H1 (cell line): ENCODE measurements at regions of chr1 and their contacts with region 1.

Region 1: DNA sequence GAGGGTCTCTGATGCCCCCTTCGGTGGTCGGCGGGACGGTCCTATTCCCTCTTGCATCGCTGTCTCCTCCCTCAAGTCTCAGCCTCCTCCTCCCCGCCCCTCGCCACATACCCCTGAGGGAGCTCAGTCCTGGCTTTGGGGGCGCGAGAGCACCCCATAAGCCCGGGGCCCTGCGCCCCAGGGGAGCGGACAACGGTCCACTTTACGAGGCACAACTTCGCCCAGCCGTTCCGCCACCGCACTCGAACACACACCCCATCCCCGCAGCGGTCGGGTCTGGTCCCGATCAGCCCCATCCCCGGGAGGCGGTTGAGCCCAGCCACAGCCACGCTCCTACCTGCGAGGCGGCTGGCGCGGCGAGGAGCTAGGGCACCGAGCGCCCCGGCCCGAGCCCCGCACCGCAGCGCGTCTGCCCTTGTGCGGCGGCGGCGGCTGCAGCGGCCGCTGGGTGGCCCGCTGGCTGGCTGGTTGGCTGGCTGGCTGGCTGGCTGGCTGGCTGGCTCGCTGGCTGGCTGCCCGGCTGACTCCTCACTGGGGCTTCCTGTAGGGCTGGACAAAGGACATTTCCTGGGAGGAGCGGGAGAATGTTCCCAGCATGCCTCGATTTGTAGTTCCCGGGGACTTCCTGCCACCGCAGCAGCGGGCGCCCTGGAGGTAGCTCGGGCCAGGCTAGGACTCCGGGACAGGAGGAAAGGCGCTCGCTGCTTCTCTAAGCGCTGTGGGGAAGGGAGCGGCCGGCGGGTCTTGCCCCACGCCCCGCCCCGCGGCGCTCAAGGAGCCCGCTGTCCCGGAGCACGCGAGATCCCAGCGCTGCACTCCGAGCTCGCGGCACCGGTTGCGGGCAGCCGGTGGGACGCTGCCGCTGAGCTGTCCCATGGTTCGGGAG is at the start of gene ZNF697:
- DNase-seq: peak; percentile 77 to 88
- H3K4me3 ChIP-seq: peak within 1 kb of the TSS; percentile 67 to 88 (median 81)
- H3K27ac ChIP-seq: peak within 1 kb of the TSS; percentile 80; the same call in 1 of the 2 replicates
- H3K4me1 ChIP-seq: peaks cover 0 to 16% (median 11%) of the 10 kb centered on the region in 4 experiments; a peak in 6 of 7 replicates
- H3K27me3 ChIP-seq: no peaks in the 10 kb centered on the region; a peak in 1 of 7 replicates
- CTCF ChIP-seq: peak; percentile 55 to 82 (median 73)
- EP300 ChIP-seq: no peak
- POLR2A ChIP-seq: peak; percentile 3 to 64; a peak in 2 of 3 replicates
- RAD21 ChIP-seq: peak; percentile 61 to 67; a peak in 3 of 4 replicates
- total RNA-seq, gene ZNF697: 17.9 and 18.3 TPM in 2 replicates

Region 2: DNA sequence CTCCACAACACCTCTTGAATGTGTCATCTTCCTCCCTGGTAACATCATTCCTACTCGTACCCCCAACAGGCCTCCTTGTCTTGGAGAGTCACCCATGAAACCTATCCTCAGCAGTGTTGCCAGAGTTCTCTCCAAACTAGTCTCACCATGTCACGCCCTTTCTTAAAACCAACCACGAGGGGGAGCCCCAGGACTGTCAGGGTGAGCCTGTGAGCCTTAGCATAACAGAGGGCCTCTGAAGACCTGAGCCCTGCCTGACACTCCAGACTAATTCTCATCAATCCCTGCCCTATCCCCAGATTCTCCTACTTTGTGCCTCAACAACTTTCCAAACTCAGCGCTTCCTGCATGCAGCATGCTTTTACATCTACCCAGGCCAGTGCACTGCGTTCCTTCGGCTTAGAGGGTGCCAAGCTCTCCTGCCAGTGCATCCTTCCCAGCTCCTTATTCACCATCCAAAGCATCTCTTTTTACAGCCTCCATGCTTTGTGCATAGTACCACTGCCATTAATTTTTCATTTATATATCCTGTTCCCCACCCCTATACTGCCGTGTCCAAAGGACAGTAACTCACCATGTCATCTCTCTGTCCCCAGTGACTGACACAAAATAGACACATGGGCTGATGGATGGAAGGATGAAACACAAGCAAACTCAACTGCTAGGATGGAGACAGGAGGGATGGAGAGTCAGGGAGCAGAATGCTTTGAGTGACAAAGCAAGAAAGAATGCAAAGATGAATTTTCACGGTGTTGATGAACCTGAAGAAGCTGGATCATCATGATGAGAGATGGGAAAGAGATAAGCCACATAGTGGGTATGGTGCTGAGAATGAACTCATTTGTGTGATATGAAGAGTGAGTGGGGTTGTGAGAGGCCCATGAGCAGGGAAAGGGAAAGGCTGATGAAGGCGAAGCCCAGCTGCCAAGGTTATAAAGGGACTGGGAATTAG is 33.9 kb before region 1 on chr1:
- CTCF ChIA-PET with region 1: interaction called, 786 read pairs
- POLR2A ChIA-PET with region 1: interaction called, 38 read pairs
- DNase-seq: peak; percentile 69 to 96
- H3K4me3 ChIP-seq: no peak overlapping the region
- H3K27ac ChIP-seq: no peak overlapping the region
- H3K4me1 ChIP-seq: peaks cover 0 to 3% (median under 1%) of the 10 kb centered on the region in 4 experiments; a peak in 5 of 7 replicates
- H3K27me3 ChIP-seq: no peaks in the 10 kb centered on the region
- CTCF ChIP-seq: peak; percentile 62 to 94 (median 80)
- EP300 ChIP-seq: no peak
- POLR2A ChIP-seq: no peak
- RAD21 ChIP-seq: peak; percentile 92 to 97

Region 3: GRCh38 chr1:119631433-119632102 is 16.4 kb before region 1 on chr1:
- CTCF ChIA-PET with region 1: interaction called, 786 read pairs
- POLR2A ChIA-PET with region 1: interaction called, 49 read pairs
- DNase-seq: peak in 1 of 2 experiments; percentile 67
- H3K4me3 ChIP-seq: peak overlapping the region in 1 of 4 experiments; percentile 34; a peak in 2 of 8 replicates
- H3K27ac ChIP-seq: no peak overlapping the region
- H3K4me1 ChIP-seq: peaks cover 0 to 6% (median 3%) of the 10 kb centered on the region in 4 experiments; a peak in 4 of 7 replicates
- H3K27me3 ChIP-seq: no peaks in the 10 kb centered on the region
- CTCF ChIP-seq: no peak
- EP300 ChIP-seq: no peak
- POLR2A ChIP-seq: no peak
- RAD21 ChIP-seq: no peak

Region 4: GRCh38 chr1:119662034-119662437 is 14.1 kb after region 1 on chr1:
- CTCF ChIA-PET with region 1: interaction called, 168 read pairs
- POLR2A ChIA-PET with region 1: interaction called, 113 read pairs
- DNase-seq: no peak
- H3K4me3 ChIP-seq: no peak overlapping the region
- H3K27ac ChIP-seq: no peak overlapping the region
- H3K4me1 ChIP-seq: peaks cover 0 to 5% (median 1%) of the 10 kb centered on the region in 4 experiments; a peak in 2 of 7 replicates
- H3K27me3 ChIP-seq: no peaks in the 10 kb centered on the region
- CTCF ChIP-seq: no peak
- EP300 ChIP-seq: no peak
- POLR2A ChIP-seq: no peak
- RAD21 ChIP-seq: no peak

Region 5: GRCh38 chr1:119675349-119676345 is 27.7 kb after region 1 on chr1:
- CTCF ChIA-PET with region 1: interaction called, 121 read pairs
- POLR2A ChIA-PET with region 1: interaction called, 19 read pairs
- DNase-seq: peak in 1 of 2 experiments; percentile 87
- H3K4me3 ChIP-seq: peak overlapping the region; percentile 27 to 55 (median 34); a peak in 5 of 8 replicates
- H3K27ac ChIP-seq: no peak overlapping the region
- H3K4me1 ChIP-seq: peaks cover 5 to 17% (median 12%) of the 10 kb centered on the region in 4 experiments; a peak in 6 of 7 replicates
- H3K27me3 ChIP-seq: no peaks in the 10 kb centered on the region
- CTCF ChIP-seq: peak; percentile 36 to 71 (median 48)
- EP300 ChIP-seq: no peak
- POLR2A ChIP-seq: peak in 1 of 2 experiments; percentile 29; a peak in 1 of 3 replicates
- RAD21 ChIP-seq: peak; percentile 44 to 54